Activated CD4-positive, alpha-beta memory T cell treated with anti-CD3 and anti-CD28 coated beads for 36 hours (primary cell): ENCODE measurements at regions of chr11 and their contacts with region 1.

Region 1: DNA sequence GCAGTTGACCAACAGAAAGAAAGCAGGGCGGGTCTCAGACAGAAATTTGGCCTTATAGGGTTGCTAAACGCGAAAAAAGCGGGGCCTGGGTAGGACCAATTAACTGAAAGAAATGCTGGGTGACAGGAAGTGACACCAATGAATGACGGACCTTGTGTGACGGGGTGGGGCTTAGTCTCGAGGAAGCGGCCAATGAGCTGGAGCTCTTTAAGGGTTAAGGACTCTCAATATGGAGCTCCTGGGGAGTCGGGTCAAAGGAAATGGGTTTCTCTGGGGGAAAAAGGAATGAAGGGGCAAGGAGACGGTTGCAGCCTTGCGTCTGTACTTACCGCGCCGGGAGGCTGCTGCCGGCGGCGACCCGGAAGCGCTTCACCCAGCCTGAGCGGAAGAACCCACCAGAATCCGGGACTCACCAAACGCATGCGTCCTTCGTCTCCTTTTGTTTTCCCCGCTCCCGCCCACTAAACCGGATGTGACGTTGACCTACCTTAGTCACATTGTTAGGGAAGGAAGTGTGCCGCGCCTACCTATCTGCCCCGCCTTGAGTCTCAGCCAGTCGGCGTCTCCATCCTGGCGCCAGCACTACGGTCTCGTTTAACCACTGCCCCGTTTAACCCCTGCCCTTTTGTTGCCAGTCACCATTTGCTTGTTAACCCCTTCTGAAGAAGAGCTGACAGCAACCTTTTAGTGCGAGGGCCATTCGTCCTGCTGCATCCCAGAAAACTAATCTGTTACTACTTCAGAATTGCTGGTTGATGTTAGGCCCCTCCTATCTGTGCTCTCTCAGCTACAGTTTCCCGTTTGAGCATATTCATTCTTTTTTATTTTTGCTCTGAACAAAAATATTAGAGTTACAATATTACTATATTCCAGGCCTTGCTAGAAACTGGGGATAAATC is at the start of gene ANAPC15:
- DNase-seq: peak; percentile 100
- H3K4me3 Mint-ChIP-seq: peak within 1 kb of the TSS; percentile 93
- H3K27ac Mint-ChIP-seq: peak within 1 kb of the TSS; percentile 100
- H3K4me1 Mint-ChIP-seq: peaks cover 18% of the 10 kb centered on the region
- H3K27me3 Mint-ChIP-seq: no peaks in the 10 kb centered on the region
- total RNA-seq, gene ANAPC15: 62.6 to 64.2 TPM

Region 2: GRCh38 chr11:70871881-70872280 is 1240.7 kb before region 1 on chr11:
- CTCF ChIA-PET with region 1: no interaction called
- POLR2A ChIA-PET with region 1: no interaction called
- intact Hi-C with region 1: no loop called
- DNase-seq: no peak
- H3K4me3 Mint-ChIP-seq: no peak overlapping the region
- H3K27ac Mint-ChIP-seq: no peak overlapping the region
- H3K4me1 Mint-ChIP-seq: no peaks in the 10 kb centered on the region
- H3K27me3 Mint-ChIP-seq: peaks cover 14% of the 10 kb centered on the region

Region 3: GRCh38 chr11:71928737-71929452 is 183.7 kb before region 1 on chr11 and contains the start of gene RNF121:
- CTCF ChIA-PET with region 1: no interaction called
- POLR2A ChIA-PET with region 1: interaction called, 9 read pairs
- intact Hi-C with region 1: loop called (anchors 1 kb)
- DNase-seq: peak; percentile 99
- H3K4me3 Mint-ChIP-seq: peak within 1 kb of the TSS; percentile 86
- H3K27ac Mint-ChIP-seq: peak within 1 kb of the TSS; percentile 97
- H3K4me1 Mint-ChIP-seq: peaks cover 44% of the 10 kb centered on the region
- H3K27me3 Mint-ChIP-seq: no peaks in the 10 kb centered on the region
- total RNA-seq, gene RNF121: 34.9 to 37.1 TPM

Region 4: GRCh38 chr11:71946144-71946571 is 166.4 kb before region 1 on chr11:
- CTCF ChIA-PET with region 1: no interaction called
- POLR2A ChIA-PET with region 1: no interaction called
- intact Hi-C with region 1: no loop called
- DNase-seq: peak; percentile 23
- H3K4me3 Mint-ChIP-seq: no peak overlapping the region
- H3K27ac Mint-ChIP-seq: peak overlapping the region; percentile 32
- H3K4me1 Mint-ChIP-seq: peaks cover 29% of the 10 kb centered on the region
- H3K27me3 Mint-ChIP-seq: no peaks in the 10 kb centered on the region

Region 5: DNA sequence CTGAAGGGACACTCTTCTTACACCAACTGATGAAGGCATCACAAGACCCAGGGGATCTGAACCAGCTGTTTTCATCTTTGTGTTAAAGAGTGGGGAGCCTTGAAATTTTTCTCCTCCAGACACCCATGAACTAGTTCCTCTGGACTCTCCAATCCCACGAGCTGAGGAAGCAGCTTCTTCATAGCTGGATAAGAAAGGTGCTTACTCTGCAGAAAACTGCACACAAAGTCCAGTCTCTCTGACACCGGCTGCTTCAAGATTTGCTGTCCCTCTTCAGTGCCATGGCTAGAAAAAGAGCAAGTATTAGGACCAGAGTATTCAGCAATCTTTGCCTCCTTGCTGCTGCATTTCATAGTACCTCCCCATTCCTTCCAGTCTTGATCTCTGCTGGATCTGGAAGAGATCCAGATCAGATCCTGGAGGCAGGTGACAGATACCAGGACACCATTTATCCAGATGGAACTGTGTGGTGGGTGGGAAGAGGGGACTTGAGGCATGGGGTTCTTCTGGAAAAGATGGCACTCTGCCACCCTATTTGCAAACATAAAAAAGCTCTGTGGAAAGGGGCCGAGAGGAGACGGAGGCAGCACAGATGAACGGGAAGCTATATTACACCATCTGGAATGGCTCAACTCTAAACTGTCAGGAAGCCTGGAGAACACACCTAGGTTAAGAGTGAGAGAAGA is 88.4 kb before region 1 on chr11:
- CTCF ChIA-PET with region 1: interaction called, 10 read pairs
- POLR2A ChIA-PET with region 1: no interaction called
- intact Hi-C with region 1: no loop called
- DNase-seq: no peak
- H3K4me3 Mint-ChIP-seq: no peak overlapping the region
- H3K27ac Mint-ChIP-seq: peak overlapping the region; percentile 2
- H3K4me1 Mint-ChIP-seq: peaks cover 24% of the 10 kb centered on the region
- H3K27me3 Mint-ChIP-seq: no peaks in the 10 kb centered on the region

Region 6: GRCh38 chr11:72040726-72041441 is 71.7 kb before region 1 on chr11:
- CTCF ChIA-PET with region 1: interaction called, 5 read pairs
- POLR2A ChIA-PET with region 1: interaction called, 5 read pairs
- intact Hi-C with region 1: loop called (anchors 2 kb)
- DNase-seq: peak; percentile 83
- H3K4me3 Mint-ChIP-seq: no peak overlapping the region
- H3K27ac Mint-ChIP-seq: no peak overlapping the region
- H3K4me1 Mint-ChIP-seq: peaks cover 34% of the 10 kb centered on the region
- H3K27me3 Mint-ChIP-seq: no peaks in the 10 kb centered on the region

Region 7: GRCh38 chr11:72222907-72223614 is 110.5 kb after region 1 on chr11:
- CTCF ChIA-PET with region 1: no interaction called
- POLR2A ChIA-PET with region 1: no interaction called
- intact Hi-C with region 1: loop called (anchors 2 kb)
- DNase-seq: peak; percentile 95
- H3K4me3 Mint-ChIP-seq: peak overlapping the region; percentile 75
- H3K27ac Mint-ChIP-seq: peak overlapping the region; percentile 77
- H3K4me1 Mint-ChIP-seq: peaks cover 24% of the 10 kb centered on the region
- H3K27me3 Mint-ChIP-seq: peaks cover 5% of the 10 kb centered on the region